Activated B cell treated with CpG ODN at 0.5 μM for 24 hours (primary cell): ENCODE measurements at regions of chr19 and their contacts with region 1.

Region 1: DNA sequence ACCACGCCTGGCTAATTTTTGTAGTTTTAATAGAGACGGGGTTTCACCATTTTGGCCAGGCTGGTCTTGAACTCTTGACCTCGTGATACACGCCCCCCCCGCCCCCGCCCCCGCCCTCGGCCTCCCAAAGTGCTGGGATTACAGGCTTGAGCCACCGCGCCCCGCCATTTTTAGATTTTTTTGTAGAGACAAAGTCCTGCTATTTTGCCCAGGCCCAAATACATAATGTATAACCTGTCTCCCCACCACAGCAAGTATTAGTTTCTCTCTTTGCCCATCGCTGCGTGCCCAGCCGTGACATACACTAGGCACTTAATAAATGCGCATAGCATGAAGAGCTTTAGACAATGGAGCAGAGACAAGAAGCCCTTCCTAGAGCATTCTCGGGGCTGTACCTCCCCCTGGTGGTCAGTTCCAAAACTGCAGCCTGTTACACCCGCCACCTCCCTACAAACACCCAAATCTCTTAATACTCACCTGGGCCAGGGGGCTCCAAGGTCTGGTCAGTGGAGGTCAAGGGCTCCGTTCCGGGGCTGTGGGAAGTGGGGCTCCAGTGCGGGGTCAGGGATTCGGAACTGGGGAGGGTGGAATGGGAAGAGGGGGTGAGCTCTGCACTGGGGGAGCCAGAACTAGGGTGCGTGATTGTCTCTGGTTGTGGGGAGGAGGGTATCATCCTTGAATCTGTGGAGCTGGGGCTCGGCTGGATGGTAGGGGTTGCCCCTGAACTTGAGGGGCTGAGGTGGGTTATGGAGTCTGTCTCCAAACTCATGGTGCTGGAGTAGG is 22.5 kb downstream of the IQCN start:
- DNase-seq: peak; percentile 75
- ATAC-seq: peak; percentile 68
- H3K4me3 Mint-ChIP-seq: no peak overlapping the region
- H3K27ac Mint-ChIP-seq: peak overlapping the region; percentile 47
- H3K4me1 Mint-ChIP-seq: peaks cover 33% of the 10 kb centered on the region
- H3K27me3 Mint-ChIP-seq: peaks cover 2% of the 10 kb centered on the region
- CTCF ChIP-seq: peak; percentile 69

Region 2: GRCh38 chr19:17915951-17916593 is 335.7 kb before region 1 on chr19:
- CTCF ChIA-PET with region 1: no interaction called
- POLR2A ChIA-PET with region 1: no interaction called
- intact Hi-C with region 1: no loop called
- DNase-seq: no peak
- ATAC-seq: no peak
- H3K4me3 Mint-ChIP-seq: no peak overlapping the region
- H3K27ac Mint-ChIP-seq: no peak overlapping the region
- H3K4me1 Mint-ChIP-seq: no peaks in the 10 kb centered on the region
- H3K27me3 Mint-ChIP-seq: peaks cover 3% of the 10 kb centered on the region
- CTCF ChIP-seq: no peak

Region 3: GRCh38 chr19:17938092-17938845 is 313.5 kb before region 1 on chr19:
- CTCF ChIA-PET with region 1: interaction called, 7 read pairs
- POLR2A ChIA-PET with region 1: no interaction called
- intact Hi-C with region 1: loop called (anchors 1 kb)
- DNase-seq: peak; percentile 78
- ATAC-seq: peak; percentile 98
- H3K4me3 Mint-ChIP-seq: no peak overlapping the region
- H3K27ac Mint-ChIP-seq: no peak overlapping the region
- H3K4me1 Mint-ChIP-seq: peaks cover 10% of the 10 kb centered on the region
- H3K27me3 Mint-ChIP-seq: no peaks in the 10 kb centered on the region
- CTCF ChIP-seq: no peak

Region 4: GRCh38 chr19:18058208-18059030 is 193.4 kb before region 1 on chr19:
- CTCF ChIA-PET with region 1: interaction called, 3 read pairs
- POLR2A ChIA-PET with region 1: no interaction called
- intact Hi-C with region 1: loop called (anchors 1 kb)
- DNase-seq: peak; percentile 81
- ATAC-seq: peak; percentile 93
- H3K4me3 Mint-ChIP-seq: peak overlapping the region; percentile 58
- H3K27ac Mint-ChIP-seq: peak overlapping the region; percentile 76
- H3K4me1 Mint-ChIP-seq: peaks cover 21% of the 10 kb centered on the region
- H3K27me3 Mint-ChIP-seq: no peaks in the 10 kb centered on the region
- CTCF ChIP-seq: peak; percentile 88

Region 5: DNA sequence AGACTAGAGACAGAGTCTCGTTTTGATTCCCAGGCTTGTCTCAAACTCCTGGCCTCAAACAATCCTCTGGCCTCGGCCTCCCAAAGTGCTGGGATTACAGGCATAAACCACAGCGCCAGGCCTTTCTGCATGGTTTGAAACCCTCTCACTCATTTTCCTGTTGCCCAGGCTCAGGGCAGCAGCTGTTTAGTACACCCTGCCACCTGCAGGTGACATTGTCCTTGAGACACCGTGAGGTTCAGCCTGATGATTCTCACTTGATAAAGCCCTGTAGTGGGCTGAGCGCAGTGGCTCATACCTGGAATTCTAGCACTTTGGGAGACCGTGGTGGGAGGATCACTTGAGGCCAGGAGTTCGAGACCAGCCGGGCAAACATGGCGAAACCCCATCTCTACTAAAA is 177.6 kb before region 1 on chr19:
- CTCF ChIA-PET with region 1: no interaction called
- POLR2A ChIA-PET with region 1: no interaction called
- intact Hi-C with region 1: no loop called
- DNase-seq: no peak
- ATAC-seq: no peak
- H3K4me3 Mint-ChIP-seq: no peak overlapping the region
- H3K27ac Mint-ChIP-seq: no peak overlapping the region
- H3K4me1 Mint-ChIP-seq: no peaks in the 10 kb centered on the region
- H3K27me3 Mint-ChIP-seq: no peaks in the 10 kb centered on the region
- CTCF ChIP-seq: no peak

Region 6: GRCh38 chr19:18117692-18118378 is 133.9 kb before region 1 on chr19:
- CTCF ChIA-PET with region 1: interaction called, 15 read pairs
- POLR2A ChIA-PET with region 1: no interaction called
- intact Hi-C with region 1: loop called (anchors 1 kb)
- DNase-seq: peak; percentile 98
- ATAC-seq: peak; percentile 93
- H3K4me3 Mint-ChIP-seq: peak overlapping the region; percentile 75
- H3K27ac Mint-ChIP-seq: peak overlapping the region; percentile 77
- H3K4me1 Mint-ChIP-seq: peaks cover 40% of the 10 kb centered on the region
- H3K27me3 Mint-ChIP-seq: no peaks in the 10 kb centered on the region
- CTCF ChIP-seq: no peak

Region 7: GRCh38 chr19:18167975-18168645 is 83.7 kb before region 1 on chr19:
- CTCF ChIA-PET with region 1: interaction called, 14 read pairs
- POLR2A ChIA-PET with region 1: interaction called, 4 read pairs
- intact Hi-C with region 1: loop called (anchors 2 kb)
- DNase-seq: peak; percentile 52
- ATAC-seq: peak; percentile 34
- H3K4me3 Mint-ChIP-seq: peak overlapping the region; percentile 66
- H3K27ac Mint-ChIP-seq: peak overlapping the region; percentile 82
- H3K4me1 Mint-ChIP-seq: peaks cover 53% of the 10 kb centered on the region
- H3K27me3 Mint-ChIP-seq: no peaks in the 10 kb centered on the region
- CTCF ChIP-seq: peak; percentile 44

Region 8: GRCh38 chr19:18328340-18329034 is 76.7 kb after region 1 on chr19:
- CTCF ChIA-PET with region 1: interaction called, 8 read pairs
- POLR2A ChIA-PET with region 1: interaction called, 10 read pairs
- intact Hi-C with region 1: no loop called
- DNase-seq: peak; percentile 56
- ATAC-seq: peak; percentile 98
- H3K4me3 Mint-ChIP-seq: peak overlapping the region; percentile 56
- H3K27ac Mint-ChIP-seq: peak overlapping the region; percentile 20
- H3K4me1 Mint-ChIP-seq: peaks cover 14% of the 10 kb centered on the region
- H3K27me3 Mint-ChIP-seq: peaks cover 8% of the 10 kb centered on the region
- CTCF ChIP-seq: peak; percentile 53

Region 9: GRCh38 chr19:18529782-18530181 is 278.0 kb after region 1 on chr19:
- CTCF ChIA-PET with region 1: no interaction called
- POLR2A ChIA-PET with region 1: no interaction called
- intact Hi-C with region 1: no loop called
- DNase-seq: no peak
- ATAC-seq: no peak
- H3K4me3 Mint-ChIP-seq: no peak overlapping the region
- H3K27ac Mint-ChIP-seq: no peak overlapping the region
- H3K4me1 Mint-ChIP-seq: no peaks in the 10 kb centered on the region
- H3K27me3 Mint-ChIP-seq: no peaks in the 10 kb centered on the region
- CTCF ChIP-seq: no peak